ENCODE measurements at regions of chr1 and their contacts with region 1.

Region 1: GRCh38 chr1:165877940-165878556 is 50.6 kb downstream of the UCK2 start:
- DNase-seq: no peak
- H3K4me3 Mint-ChIP-seq: no peak overlapping the region
- H3K27ac Mint-ChIP-seq: peak overlapping the region; percentile 4
- H3K4me1 Mint-ChIP-seq: peaks cover 44% of the 10 kb centered on the region
- H3K27me3 Mint-ChIP-seq: no peaks in the 10 kb centered on the region

Region 2: DNA sequence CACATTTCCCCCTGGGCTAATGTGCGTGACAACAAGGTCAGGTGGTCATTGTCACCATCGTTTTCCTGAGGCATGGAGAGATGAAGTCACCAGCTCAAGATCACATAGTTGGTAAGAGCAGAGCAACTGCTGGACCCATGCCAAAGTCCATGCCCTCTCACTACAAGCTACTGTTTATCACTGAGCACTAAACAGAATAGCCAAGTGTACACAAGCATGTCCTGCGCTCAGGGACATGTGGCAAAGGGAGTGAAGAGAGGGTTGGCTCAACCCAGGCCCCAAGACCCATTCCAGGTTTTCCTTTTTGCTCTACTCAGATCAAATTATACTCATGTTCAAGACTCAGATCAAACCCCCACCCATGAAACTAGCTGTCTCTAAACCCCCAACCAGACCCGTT is 313.5 kb before region 1 on chr1:
- intact Hi-C with region 1: no loop called
- DNase-seq: no peak
- H3K4me3 Mint-ChIP-seq: no peak overlapping the region
- H3K27ac Mint-ChIP-seq: no peak overlapping the region
- H3K4me1 Mint-ChIP-seq: no peaks in the 10 kb centered on the region
- H3K27me3 Mint-ChIP-seq: peaks cover 38% of the 10 kb centered on the region

Region 3: DNA sequence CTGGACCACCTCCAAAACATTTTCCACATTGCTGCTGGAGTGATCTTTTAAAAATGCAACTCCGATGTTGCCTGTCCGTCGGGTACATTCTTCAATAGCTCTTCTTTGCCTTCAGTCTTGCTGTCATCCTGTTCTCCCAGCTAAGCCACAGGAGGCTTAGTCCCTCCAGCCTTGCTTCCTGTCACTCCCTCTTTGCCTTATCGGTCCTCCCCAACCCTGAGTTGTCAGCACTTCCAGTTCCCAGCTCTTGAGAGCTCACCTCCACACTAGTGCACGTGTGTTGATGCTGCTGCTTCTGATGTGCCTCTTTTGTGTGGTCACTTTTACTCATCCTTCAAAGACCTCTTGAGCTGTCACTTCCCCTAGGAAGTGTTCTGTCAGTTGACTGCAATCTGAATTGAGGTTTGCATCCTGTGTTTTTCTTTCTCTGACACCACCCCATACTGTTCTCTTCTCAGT is 35.3 kb before region 1 on chr1:
- intact Hi-C with region 1: loop called (anchors 5 kb)
- DNase-seq: peak; percentile 71
- H3K4me3 Mint-ChIP-seq: peak overlapping the region; percentile 26
- H3K27ac Mint-ChIP-seq: peak overlapping the region; percentile 10
- H3K4me1 Mint-ChIP-seq: peaks cover 59% of the 10 kb centered on the region
- H3K27me3 Mint-ChIP-seq: no peaks in the 10 kb centered on the region